Activated CD4-positive, alpha-beta memory T cell treated with anti-CD3 and anti-CD28 coated beads, Interleukin-2, amount 10 ng/mL, durations not matched to agents 7 days and 5 days (primary cell): ENCODE measurements at regions of chr6 and their contacts with region 1.

Region 1: DNA sequence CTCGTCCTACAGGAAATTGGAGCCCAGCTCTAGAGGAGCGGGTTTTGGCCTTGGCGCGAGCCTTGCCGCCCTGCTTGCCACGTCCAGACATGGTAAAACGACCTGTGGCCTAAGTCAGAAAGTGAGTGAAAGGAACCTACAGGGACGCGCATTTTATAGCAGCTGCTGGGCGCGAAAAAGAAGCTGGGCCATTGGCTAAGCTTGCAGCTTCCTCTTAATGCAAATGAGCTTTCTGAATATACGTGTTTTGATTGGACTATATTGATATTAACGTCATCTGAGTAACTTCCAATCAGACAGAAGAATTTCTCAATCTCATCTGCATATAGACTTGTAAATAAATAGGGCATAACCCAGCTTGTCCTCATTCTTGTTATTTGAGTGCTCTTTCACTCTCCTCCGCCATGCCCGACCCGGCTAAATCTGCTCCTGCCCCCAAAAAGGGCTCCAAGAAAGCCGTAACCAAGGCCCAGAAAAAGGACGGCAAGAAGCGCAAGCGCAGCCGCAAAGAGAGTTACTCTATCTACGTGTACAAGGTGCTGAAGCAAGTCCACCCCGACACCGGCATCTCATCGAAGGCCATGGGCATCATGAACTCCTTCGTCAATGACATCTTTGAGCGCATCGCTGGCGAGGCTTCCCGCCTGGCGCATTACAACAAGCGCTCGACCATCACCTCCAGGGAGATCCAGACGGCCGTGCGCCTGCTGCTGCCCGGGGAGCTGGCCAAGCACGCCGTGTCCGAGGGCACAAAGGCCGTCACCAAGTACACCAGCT is 18.9 kb downstream of the OR2B2 start:
- DNase-seq: peak; percentile 95
- H3K4me3 Mint-ChIP-seq: no peak overlapping the region
- H3K27ac Mint-ChIP-seq: no peak overlapping the region
- H3K4me1 Mint-ChIP-seq: peaks cover 54% of the 10 kb centered on the region
- H3K27me3 Mint-ChIP-seq: no peaks in the 10 kb centered on the region

Region 2: DNA sequence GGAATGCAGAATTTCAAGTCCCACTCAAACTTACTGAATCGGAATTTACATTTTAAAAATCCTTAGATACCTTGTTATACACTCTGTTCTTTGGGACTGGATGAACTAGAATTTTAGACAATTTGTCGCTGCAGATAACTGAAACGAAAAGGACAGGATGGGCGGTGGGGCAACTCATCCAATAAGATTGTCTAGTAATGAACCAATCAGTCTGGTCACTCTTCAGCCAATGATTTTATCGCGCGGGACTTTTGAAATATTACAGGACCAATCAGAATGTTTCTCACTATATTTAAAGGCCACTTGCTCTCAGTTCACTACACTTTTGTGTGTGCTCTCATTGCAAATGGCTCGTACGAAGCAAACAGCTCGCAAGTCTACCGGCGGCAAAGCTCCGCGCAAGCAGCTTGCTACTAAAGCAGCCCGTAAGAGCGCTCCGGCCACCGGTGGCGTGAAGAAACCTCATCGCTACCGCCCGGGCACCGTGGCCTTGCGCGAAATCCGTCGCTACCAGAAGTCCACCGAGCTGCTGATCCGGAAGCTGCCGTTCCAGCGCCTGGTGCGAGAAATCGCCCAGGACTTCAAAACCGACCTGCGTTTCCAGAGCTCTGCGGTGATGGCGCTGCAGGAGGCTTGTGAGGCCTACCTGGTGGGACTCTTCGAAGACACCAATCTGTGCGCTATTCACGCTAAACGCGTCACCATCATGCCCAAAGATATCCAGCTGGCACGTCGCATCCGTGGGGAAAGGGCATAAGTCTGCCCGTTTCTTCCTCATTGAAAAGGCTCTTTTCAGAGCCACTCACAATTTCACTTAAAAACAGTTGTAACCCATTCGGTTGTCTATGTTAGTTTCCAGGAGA is 1848.0 kb before region 1 on chr6:
- CTCF ChIA-PET with region 1: no interaction called
- POLR2A ChIA-PET with region 1: interaction called, 15 read pairs
- DNase-seq: peak; percentile 82
- H3K4me3 Mint-ChIP-seq: peak overlapping the region; percentile 79
- H3K27ac Mint-ChIP-seq: peak overlapping the region; percentile 99
- H3K4me1 Mint-ChIP-seq: peaks cover 44% of the 10 kb centered on the region
- H3K27me3 Mint-ChIP-seq: no peaks in the 10 kb centered on the region

Region 3: DNA sequence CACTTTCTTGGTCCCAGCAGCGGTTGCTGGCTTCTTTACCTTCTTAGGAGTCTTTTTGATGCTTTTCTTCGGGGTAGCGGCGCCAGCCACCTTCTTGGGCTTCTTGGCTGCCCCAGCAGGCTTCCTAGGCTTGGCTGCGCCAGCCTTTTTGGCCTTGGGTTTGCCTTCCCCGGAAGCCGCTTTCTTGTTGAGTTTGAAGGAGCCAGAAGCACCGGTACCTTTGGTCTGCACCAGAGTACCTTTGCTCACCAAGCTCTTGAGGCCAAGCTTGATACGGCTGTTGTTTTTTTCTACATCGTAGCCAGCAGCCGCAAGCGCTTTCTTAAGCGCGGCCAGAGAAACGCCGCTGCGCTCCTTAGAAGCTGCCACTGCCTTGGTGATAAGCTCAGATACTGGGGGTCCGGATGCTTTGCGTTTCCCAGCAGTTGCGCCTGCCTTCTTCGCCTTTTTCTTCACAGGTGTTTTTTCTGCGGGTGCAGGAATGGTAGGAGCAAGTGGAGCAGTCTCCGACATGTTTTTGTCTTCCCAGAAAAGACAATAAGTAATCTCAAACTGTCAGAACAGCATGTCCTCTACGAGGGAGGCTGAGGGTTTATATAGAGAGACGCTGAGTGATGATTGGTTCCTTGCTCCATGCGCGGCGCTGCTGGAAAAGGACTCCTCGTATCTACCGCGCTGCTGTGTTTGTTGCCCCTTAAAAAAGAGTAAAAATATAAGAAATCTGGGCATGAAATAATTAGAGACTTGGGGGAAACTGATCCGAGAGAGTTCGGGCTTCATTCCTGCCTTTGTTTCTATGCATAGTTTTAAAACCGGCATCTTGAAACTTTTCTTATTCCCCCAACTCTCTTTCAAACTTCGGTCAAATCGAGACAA is 1658.6 kb before region 1 on chr6:
- CTCF ChIA-PET with region 1: no interaction called
- POLR2A ChIA-PET with region 1: interaction called, 27 read pairs
- DNase-seq: peak; percentile 85
- H3K4me3 Mint-ChIP-seq: peak overlapping the region; percentile 76
- H3K27ac Mint-ChIP-seq: peak overlapping the region; percentile 95
- H3K4me1 Mint-ChIP-seq: peaks cover 41% of the 10 kb centered on the region
- H3K27me3 Mint-ChIP-seq: no peaks in the 10 kb centered on the region

Region 4: DNA sequence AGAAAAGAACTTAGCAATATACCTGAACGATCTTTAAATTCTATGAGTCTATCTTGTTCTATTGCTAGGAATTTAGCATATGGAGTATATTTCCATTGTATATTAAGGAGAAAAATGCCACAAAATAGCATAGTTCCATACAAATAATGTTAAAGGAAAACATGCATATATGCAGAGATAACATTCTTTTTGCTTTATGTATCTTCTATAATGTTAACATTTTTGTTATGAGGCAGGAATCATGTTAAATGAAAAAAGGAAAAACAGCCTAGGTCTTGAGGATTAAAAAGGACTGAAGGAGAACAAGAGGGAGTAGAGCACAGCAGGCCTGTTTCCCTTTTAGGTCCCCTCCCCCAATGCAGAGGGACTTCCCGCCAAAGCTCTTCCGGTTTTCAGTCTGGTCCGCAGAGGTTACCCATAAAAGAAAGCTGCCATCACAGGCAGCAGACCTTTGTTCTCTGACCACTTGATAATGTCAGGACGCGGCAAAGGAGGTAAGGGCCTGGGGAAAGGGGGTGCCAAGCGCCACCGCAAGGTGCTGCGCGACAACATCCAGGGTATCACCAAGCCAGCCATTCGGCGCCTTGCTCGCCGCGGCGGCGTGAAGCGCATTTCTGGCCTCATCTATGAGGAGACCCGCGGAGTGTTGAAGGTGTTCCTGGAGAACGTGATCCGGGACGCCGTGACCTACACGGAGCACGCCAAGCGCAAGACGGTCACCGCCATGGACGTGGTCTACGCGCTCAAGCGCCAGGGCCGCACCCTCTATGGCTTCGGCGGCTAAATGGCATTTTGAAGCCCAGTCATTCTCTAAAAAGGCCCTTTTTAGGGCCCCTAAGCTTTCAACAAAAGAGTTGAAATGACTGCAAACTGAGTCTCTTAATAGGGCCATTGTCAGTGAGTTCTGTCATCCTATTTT is 754.2 kb before region 1 on chr6:
- CTCF ChIA-PET with region 1: no interaction called
- POLR2A ChIA-PET with region 1: interaction called, 167 read pairs
- DNase-seq: peak; percentile 80
- H3K4me3 Mint-ChIP-seq: peak overlapping the region; percentile 91
- H3K27ac Mint-ChIP-seq: peak overlapping the region; percentile 98
- H3K4me1 Mint-ChIP-seq: peaks cover 67% of the 10 kb centered on the region
- H3K27me3 Mint-ChIP-seq: no peaks in the 10 kb centered on the region

Region 5: GRCh38 chr6:27753668-27754407 is 139.4 kb before region 1 on chr6:
- CTCF ChIA-PET with region 1: interaction called, 14 read pairs
- POLR2A ChIA-PET with region 1: interaction called, 18 read pairs
- DNase-seq: peak; percentile 80
- H3K4me3 Mint-ChIP-seq: peak overlapping the region; percentile 73
- H3K27ac Mint-ChIP-seq: peak overlapping the region; percentile 100
- H3K4me1 Mint-ChIP-seq: peaks cover 48% of the 10 kb centered on the region
- H3K27me3 Mint-ChIP-seq: peaks cover 5% of the 10 kb centered on the region

Region 6: GRCh38 chr6:27864906-27865849 is 28.1 kb before region 1 on chr6:
- CTCF ChIA-PET with region 1: interaction called, 190 read pairs
- POLR2A ChIA-PET with region 1: interaction called, 1,597 read pairs
- DNase-seq: peak; percentile 85
- H3K4me3 Mint-ChIP-seq: peak overlapping the region; percentile 81
- H3K27ac Mint-ChIP-seq: peak overlapping the region; percentile 99
- H3K4me1 Mint-ChIP-seq: peaks cover 61% of the 10 kb centered on the region
- H3K27me3 Mint-ChIP-seq: peaks cover 4% of the 10 kb centered on the region

Region 7: DNA sequence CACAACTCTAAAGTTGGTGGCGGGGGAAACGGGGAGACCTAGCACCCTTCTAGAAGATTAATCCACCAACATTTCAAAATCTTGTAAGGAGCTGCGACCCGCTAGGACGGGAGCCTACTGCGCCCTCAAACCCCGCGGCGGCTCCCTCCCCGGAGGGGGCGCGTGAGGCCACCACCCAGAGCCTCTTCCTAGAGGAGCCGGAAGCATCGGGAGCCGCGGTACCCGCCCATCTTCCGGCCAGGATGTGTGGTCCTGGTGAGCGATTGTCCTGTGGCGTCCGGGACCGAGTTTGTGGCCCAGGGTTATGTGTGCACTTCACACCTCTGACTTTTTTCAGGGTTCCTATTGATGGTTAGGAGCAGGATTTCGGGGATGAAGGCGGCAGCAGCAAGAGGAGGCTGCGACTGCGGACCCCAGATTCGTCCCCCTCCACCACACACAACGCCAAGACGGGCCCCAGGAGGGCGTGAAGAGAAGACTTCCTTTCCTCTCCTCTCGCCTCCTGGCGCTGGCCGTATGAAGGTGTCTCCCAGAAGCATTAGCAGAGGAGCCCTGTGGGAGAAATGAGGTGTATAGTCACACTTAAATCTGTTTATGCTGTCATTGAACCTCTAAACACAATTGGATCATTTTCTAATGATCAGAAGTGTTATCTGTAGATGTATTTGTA is 197.8 kb after region 1 on chr6:
- CTCF ChIA-PET with region 1: no interaction called
- POLR2A ChIA-PET with region 1: no interaction called
- DNase-seq: no peak
- H3K4me3 Mint-ChIP-seq: no peak overlapping the region
- H3K27ac Mint-ChIP-seq: no peak overlapping the region
- H3K4me1 Mint-ChIP-seq: no peaks in the 10 kb centered on the region
- H3K27me3 Mint-ChIP-seq: no peaks in the 10 kb centered on the region

Region 8: DNA sequence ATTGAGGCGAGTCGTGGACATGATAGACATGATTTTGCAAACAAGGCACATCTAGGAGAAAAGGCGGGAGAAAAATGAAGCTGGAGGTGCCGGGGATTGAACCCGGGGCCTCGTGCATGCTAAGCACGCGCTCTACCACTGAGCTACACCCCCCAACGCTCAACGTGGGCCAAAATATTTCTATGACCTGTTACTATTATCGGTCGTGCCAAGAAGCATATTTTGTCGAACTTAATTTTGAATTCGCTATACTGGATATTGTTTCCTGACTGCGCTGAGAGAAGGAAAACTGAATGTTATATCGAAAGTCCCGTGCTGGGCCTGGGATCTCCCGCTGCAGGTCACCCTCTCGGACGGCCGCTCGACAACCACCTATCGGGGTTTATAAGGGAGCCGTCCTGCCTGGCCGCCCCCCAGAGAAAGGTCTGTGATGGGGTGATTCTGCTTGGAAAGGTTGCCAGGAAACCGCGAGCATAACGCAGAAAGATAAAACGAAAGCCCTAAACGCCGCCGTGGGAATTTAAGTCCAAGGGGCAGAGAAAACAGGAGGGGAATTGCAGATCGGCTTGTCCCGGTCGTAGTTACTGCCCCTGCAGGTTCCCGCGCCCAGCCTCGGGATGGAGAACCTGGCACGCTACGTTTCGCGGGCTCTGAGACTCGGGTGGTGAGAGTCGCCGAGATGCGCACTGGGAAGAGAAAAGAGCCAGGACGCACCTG is 970.5 kb after region 1 on chr6:
- CTCF ChIA-PET with region 1: no interaction called
- POLR2A ChIA-PET with region 1: interaction called, 28 read pairs
- DNase-seq: peak; percentile 85
- H3K4me3 Mint-ChIP-seq: peak overlapping the region; percentile 81
- H3K27ac Mint-ChIP-seq: peak overlapping the region; percentile 76
- H3K4me1 Mint-ChIP-seq: peaks cover 46% of the 10 kb centered on the region
- H3K27me3 Mint-ChIP-seq: peaks cover 12% of the 10 kb centered on the region